IMR-90 (cell line): ENCODE measurements at regions of chr21 and their contacts with region 1.

Region 1: DNA sequence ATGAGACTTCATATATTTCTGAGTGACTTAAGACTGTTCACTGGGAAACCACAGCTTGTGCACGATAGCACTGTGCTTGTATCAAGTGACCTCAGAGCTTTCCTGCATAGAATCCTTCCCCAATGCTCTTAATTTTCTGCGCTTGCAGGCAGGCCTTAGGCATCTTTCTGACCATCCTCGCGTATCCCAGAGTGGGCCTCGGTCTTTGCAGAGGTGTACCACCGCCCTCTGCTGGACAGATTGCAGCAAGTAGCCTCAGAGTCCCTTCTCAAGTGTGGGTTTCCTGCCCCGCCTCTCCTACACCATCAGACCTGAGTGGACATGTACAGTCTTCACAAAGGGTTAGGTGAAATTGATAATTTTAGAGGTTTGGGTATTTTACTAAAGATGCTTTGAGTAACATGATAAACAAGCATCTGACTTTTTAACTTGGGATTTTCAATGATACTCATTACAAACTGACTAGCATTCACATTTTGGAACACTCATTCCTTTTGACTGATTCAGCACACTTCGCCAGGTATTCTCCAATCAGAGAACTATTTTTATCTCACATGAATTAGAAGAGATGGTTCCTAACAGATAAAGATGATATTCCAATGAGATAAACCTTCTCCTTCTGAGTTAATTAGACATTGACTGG is 246.5 kb upstream of the USP25 start:
- DNase-seq: peak; percentile 82
- ATAC-seq: peak; percentile 100
- H3K4me3 ChIP-seq: no peak overlapping the region
- H3K27ac ChIP-seq: no peak overlapping the region
- H3K4me1 ChIP-seq: no peaks in the 10 kb centered on the region
- H3K27me3 ChIP-seq: no peaks in the 10 kb centered on the region
- CTCF ChIP-seq: peak; percentile 91
- POLR2A ChIP-seq: no peak
- RAD21 ChIP-seq: peak; percentile 96

Region 2: DNA sequence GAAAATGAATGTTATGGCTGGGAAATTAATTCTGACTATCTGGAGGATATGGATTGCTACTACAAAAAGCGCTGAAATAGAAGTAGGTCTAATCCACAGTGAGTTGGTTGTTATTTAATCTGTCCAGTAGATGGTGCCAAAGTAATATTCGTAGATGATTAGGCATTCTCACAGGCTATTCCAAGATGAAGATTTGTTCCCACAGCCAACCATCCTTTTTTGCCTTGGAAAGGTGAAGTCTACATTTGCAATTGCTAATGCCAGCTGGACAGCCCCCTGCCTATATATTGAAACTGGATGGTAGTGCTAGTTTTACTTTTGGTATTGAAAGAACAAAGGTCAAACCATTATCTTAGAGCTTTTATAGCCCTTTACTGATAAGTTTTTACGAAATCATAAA is 1223.5 kb before region 1 on chr21:
- CTCF ChIA-PET with region 1: no interaction called
- POLR2A ChIA-PET with region 1: no interaction called
- dilution Hi-C with region 1: no loop called
- in situ Hi-C with region 1: no loop called
- intact Hi-C with region 1: loop called (anchors 1 kb)
- DNase-seq: peak; percentile 56
- ATAC-seq: peak; percentile 74
- H3K4me3 ChIP-seq: no peak overlapping the region
- H3K27ac ChIP-seq: no peak overlapping the region
- H3K4me1 ChIP-seq: no peaks in the 10 kb centered on the region
- H3K27me3 ChIP-seq: no peaks in the 10 kb centered on the region
- CTCF ChIP-seq: peak; percentile 61
- POLR2A ChIP-seq: no peak
- RAD21 ChIP-seq: peak; percentile 63

Region 3: GRCh38 chr21:14388282-14388681 is 1095.0 kb before region 1 on chr21:
- CTCF ChIA-PET with region 1: no interaction called
- POLR2A ChIA-PET with region 1: no interaction called
- dilution Hi-C with region 1: no loop called
- in situ Hi-C with region 1: loop called (anchors 5 kb)
- intact Hi-C with region 1: no loop called
- DNase-seq: no peak
- ATAC-seq: no peak
- H3K4me3 ChIP-seq: no peak overlapping the region
- H3K27ac ChIP-seq: no peak overlapping the region
- H3K4me1 ChIP-seq: no peaks in the 10 kb centered on the region
- H3K27me3 ChIP-seq: no peaks in the 10 kb centered on the region
- CTCF ChIP-seq: no peak
- POLR2A ChIP-seq: no peak
- RAD21 ChIP-seq: no peak

Region 4: DNA sequence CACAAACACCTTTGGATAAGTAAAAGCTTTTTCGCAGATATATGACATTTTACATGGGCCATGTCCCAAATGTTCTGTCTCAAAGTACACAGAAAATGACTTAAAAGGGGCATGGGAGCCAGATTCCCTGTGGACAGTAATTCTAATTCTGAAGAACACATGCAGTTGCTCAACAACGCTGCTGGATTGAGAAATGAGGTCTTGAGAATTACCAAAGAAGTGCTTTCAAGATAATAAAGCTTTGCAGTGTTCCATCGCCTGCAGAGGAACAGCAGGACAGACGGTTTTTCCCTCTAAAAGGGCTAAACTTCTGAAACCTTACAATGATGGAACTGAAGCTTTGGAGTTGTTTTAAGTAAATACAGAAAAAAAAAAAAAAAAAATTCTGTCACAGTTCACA is 1045.0 kb before region 1 on chr21:
- CTCF ChIA-PET with region 1: no interaction called
- POLR2A ChIA-PET with region 1: no interaction called
- dilution Hi-C with region 1: no loop called
- in situ Hi-C with region 1: no loop called
- intact Hi-C with region 1: loop called (anchors 10 kb)
- DNase-seq: no peak
- ATAC-seq: no peak
- H3K4me3 ChIP-seq: no peak overlapping the region
- H3K27ac ChIP-seq: no peak overlapping the region
- H3K4me1 ChIP-seq: no peaks in the 10 kb centered on the region
- H3K27me3 ChIP-seq: no peaks in the 10 kb centered on the region
- CTCF ChIP-seq: no peak
- POLR2A ChIP-seq: no peak
- RAD21 ChIP-seq: no peak

Region 5: GRCh38 chr21:15064576-15065391 is 418.5 kb before region 1 on chr21 and contains the start of gene NRIP1:
- CTCF ChIA-PET with region 1: interaction called, 3 read pairs
- POLR2A ChIA-PET with region 1: no interaction called
- dilution Hi-C with region 1: no loop called
- in situ Hi-C with region 1: no loop called
- intact Hi-C with region 1: loop called (anchors 1 kb)
- DNase-seq: peak; percentile 87
- ATAC-seq: peak; percentile 83
- H3K4me3 ChIP-seq: peak within 1 kb of the TSS; percentile 99
- H3K27ac ChIP-seq: peak within 1 kb of the TSS; percentile 94
- H3K4me1 ChIP-seq: no peaks in the 10 kb centered on the region; the same call in 1 of the 2 replicates
- H3K27me3 ChIP-seq: no peaks in the 10 kb centered on the region
- CTCF ChIP-seq: no peak
- POLR2A ChIP-seq: peak; percentile 71
- RAD21 ChIP-seq: no peak
- total RNA-seq, gene NRIP1: 73.8 and 85.3 TPM in 2 replicates

Region 6: GRCh38 chr21:15241997-15242736 is 241.1 kb before region 1 on chr21:
- CTCF ChIA-PET with region 1: no interaction called
- POLR2A ChIA-PET with region 1: no interaction called
- dilution Hi-C with region 1: no loop called
- in situ Hi-C with region 1: no loop called
- intact Hi-C with region 1: no loop called
- DNase-seq: no peak
- ATAC-seq: no peak
- H3K4me3 ChIP-seq: no peak overlapping the region
- H3K27ac ChIP-seq: no peak overlapping the region
- H3K4me1 ChIP-seq: no peaks in the 10 kb centered on the region
- H3K27me3 ChIP-seq: no peaks in the 10 kb centered on the region
- CTCF ChIP-seq: no peak
- POLR2A ChIP-seq: no peak
- RAD21 ChIP-seq: no peak

Region 7: GRCh38 chr21:15400905-15401304 is 82.4 kb before region 1 on chr21:
- CTCF ChIA-PET with region 1: no interaction called
- POLR2A ChIA-PET with region 1: no interaction called
- dilution Hi-C with region 1: no loop called
- in situ Hi-C with region 1: no loop called
- intact Hi-C with region 1: no loop called
- DNase-seq: no peak
- ATAC-seq: no peak
- H3K4me3 ChIP-seq: no peak overlapping the region
- H3K27ac ChIP-seq: no peak overlapping the region
- H3K4me1 ChIP-seq: no peaks in the 10 kb centered on the region
- H3K27me3 ChIP-seq: no peaks in the 10 kb centered on the region
- CTCF ChIP-seq: no peak
- POLR2A ChIP-seq: no peak
- RAD21 ChIP-seq: no peak

Region 8: GRCh38 chr21:16241479-16241963 is 758.3 kb after region 1 on chr21:
- CTCF ChIA-PET with region 1: no interaction called
- POLR2A ChIA-PET with region 1: no interaction called
- dilution Hi-C with region 1: no loop called
- in situ Hi-C with region 1: no loop called
- intact Hi-C with region 1: no loop called
- DNase-seq: no peak
- ATAC-seq: no peak
- H3K4me3 ChIP-seq: no peak overlapping the region
- H3K27ac ChIP-seq: no peak overlapping the region
- H3K4me1 ChIP-seq: no peaks in the 10 kb centered on the region
- H3K27me3 ChIP-seq: no peaks in the 10 kb centered on the region
- CTCF ChIP-seq: no peak
- POLR2A ChIP-seq: no peak
- RAD21 ChIP-seq: no peak